HepG2 (cell line): ENCODE measurements at regions of chr17 and their contacts with region 1.

Region 1: DNA sequence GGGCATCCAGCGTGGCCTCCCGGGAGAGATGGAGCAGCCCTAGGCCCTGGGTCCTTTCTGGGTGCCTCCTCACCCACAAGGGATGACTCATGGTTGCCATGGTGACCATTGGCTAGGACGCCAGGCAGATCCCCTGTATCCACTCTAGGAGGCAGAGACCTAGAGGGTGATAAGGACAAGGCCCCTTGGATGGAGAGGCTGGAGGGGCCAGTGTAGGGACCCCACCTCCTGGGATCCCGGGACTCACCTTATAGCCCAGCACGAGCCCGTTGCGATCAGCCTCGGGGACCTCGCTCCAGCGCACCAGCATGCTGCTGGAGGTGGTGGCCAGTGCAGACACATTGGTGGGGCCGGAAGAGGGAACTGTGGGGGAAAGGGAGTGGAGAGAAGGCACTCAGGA is 82.2 kb upstream of the CDC42EP4 start:
- DNase-seq: peak; percentile 20
- ATAC-seq: no peak
- H3K4me3 ChIP-seq: no peak overlapping the region
- H3K27ac ChIP-seq: no peak overlapping the region
- H3K4me1 ChIP-seq: 0 out of 2 replicates have a peak, but pooled peaks cover 8% of the 10 kb centered on the region
- H3K27me3 ChIP-seq: peaks cover 32 to 85% of the 10 kb centered on the region in 2 experiments
- CTCF ChIP-seq: no peak
- EP300 ChIP-seq: no peak
- POLR2A ChIP-seq: no peak
- RAD21 ChIP-seq: no peak

Region 2: GRCh38 chr17:72976971-72977770 is 416.8 kb before region 1 on chr17:
- CTCF ChIA-PET with region 1: no interaction called
- POLR2A ChIA-PET with region 1: no interaction called
- in situ Hi-C with region 1: loop called (anchors 25 kb)
- intact Hi-C with region 1: no loop called
- DNase-seq: no peak
- ATAC-seq: peak; percentile 32
- H3K4me3 ChIP-seq: peak overlapping the region in 1 of 3 experiments; percentile 43; a peak in 2 of 6 replicates
- H3K27ac ChIP-seq: no peak overlapping the region
- H3K4me1 ChIP-seq: peaks cover 37% of the 10 kb centered on the region
- H3K27me3 ChIP-seq: peaks cover 2 to 3% of the 10 kb centered on the region in 2 experiments; a peak in 3 of 5 replicates
- CTCF ChIP-seq: no peak
- EP300 ChIP-seq: no peak
- POLR2A ChIP-seq: no peak
- RAD21 ChIP-seq: no peak

Region 3: DNA sequence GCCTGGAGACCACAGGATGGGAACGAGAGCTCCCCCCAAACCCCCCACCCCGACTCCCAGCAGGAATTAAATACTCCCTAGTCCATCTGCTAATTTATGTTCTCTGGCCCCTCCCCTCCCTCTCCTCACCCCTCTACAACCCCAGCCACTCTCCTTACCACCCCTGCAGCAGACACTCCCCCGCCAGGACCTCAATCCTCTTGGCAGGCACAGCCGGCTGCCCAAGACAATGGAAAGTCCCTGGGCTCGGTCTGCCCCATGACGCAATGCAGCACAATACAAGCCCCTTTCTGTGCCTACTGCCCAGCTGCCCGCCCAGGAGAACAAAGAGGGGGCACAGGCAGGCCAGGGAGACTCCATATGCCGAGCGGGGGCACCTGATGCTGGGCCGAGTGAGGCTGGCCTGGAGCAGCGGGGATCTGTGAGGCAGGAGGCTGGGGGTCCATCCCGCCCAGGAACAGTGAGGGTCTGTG is 51.9 kb before region 1 on chr17:
- CTCF ChIA-PET with region 1: no interaction called
- POLR2A ChIA-PET with region 1: no interaction called
- in situ Hi-C with region 1: no loop called
- intact Hi-C with region 1: no loop called
- DNase-seq: no peak
- ATAC-seq: peak; percentile 14; the same call in 2 of the 3 replicates
- H3K4me3 ChIP-seq: no peak overlapping the region
- H3K27ac ChIP-seq: no peak overlapping the region
- H3K4me1 ChIP-seq: peaks cover 47% of the 10 kb centered on the region
- H3K27me3 ChIP-seq: peaks cover 12 to 76% of the 10 kb centered on the region in 2 experiments
- CTCF ChIP-seq: no peak
- EP300 ChIP-seq: no peak
- POLR2A ChIP-seq: no peak
- RAD21 ChIP-seq: no peak

Region 4: DNA sequence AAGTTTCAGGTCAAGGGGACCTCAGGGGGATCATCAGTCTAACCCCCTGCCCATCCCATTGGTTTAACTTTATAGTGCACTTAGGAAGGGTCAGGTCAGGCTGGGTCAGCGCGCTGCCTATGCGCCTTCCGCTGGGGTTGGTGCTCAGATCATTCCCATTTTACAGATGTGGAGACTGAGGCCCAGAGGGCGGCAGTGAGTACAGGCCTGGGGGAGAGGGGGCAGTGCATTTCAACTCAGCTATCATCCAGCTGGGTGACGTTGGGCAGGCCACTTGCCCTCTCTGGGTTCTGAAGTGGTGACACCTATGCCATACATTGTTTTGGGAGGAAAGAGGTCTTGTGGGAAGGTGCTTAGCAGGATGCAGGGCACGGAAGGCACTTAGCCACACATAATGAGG is 45.6 kb after region 1 on chr17:
- CTCF ChIA-PET with region 1: no interaction called
- POLR2A ChIA-PET with region 1: no interaction called
- in situ Hi-C with region 1: no loop called
- intact Hi-C with region 1: no loop called
- DNase-seq: no peak
- ATAC-seq: no peak
- H3K4me3 ChIP-seq: no peak overlapping the region
- H3K27ac ChIP-seq: no peak overlapping the region
- H3K4me1 ChIP-seq: no peaks in the 10 kb centered on the region
- H3K27me3 ChIP-seq: peaks cover 11 to 59% of the 10 kb centered on the region in 2 experiments; a peak in 4 of 5 replicates
- CTCF ChIP-seq: no peak
- EP300 ChIP-seq: no peak
- POLR2A ChIP-seq: no peak
- RAD21 ChIP-seq: no peak

Region 5: DNA sequence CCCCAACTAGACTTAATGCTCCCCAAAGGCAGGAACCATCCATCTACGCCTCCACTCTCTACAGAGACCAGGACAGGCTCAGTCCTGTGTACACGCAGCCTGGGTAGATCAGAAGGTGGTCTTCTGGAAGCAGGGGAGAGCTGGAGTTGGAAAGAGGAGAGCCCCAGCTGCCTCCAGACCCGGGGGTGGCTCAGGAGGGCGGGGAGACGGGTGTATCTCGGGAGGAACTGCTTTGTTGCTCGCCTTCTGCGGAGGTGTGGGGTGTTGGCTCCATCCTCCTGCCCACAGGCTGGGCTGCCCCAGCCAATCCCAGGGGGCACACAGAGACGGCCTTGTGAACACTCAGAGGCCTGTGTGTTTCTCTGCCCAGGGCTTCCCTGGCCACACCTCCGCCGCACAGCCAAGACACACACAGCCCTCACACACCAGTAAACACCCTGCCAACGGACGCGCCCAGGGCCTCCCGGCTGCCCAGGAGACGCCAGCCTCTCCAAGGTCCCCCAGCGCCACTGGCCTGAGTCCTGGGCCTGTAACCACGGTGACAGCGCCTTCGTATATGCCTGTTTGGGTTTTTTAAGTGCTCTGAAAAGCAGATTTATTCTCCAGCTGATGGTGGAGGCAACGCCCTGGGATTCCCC is 61.2 kb after region 1 on chr17:
- CTCF ChIA-PET with region 1: no interaction called
- POLR2A ChIA-PET with region 1: no interaction called
- in situ Hi-C with region 1: no loop called
- intact Hi-C with region 1: no loop called
- DNase-seq: no peak
- ATAC-seq: peak; percentile 38; the same call in 2 of the 3 replicates
- H3K4me3 ChIP-seq: no peak overlapping the region
- H3K27ac ChIP-seq: no peak overlapping the region
- H3K4me1 ChIP-seq: no peaks in the 10 kb centered on the region
- H3K27me3 ChIP-seq: peaks cover 11 to 53% of the 10 kb centered on the region in 2 experiments; a peak in 4 of 5 replicates
- CTCF ChIP-seq: no peak
- EP300 ChIP-seq: no peak
- POLR2A ChIP-seq: no peak
- RAD21 ChIP-seq: no peak